Activated naive CD4-positive, alpha-beta T cell treated with anti-CD3 and anti-CD28 coated beads for 36 hours (primary cell): ENCODE measurements at regions of chr1 and their contacts with region 1.

Region 1: DNA sequence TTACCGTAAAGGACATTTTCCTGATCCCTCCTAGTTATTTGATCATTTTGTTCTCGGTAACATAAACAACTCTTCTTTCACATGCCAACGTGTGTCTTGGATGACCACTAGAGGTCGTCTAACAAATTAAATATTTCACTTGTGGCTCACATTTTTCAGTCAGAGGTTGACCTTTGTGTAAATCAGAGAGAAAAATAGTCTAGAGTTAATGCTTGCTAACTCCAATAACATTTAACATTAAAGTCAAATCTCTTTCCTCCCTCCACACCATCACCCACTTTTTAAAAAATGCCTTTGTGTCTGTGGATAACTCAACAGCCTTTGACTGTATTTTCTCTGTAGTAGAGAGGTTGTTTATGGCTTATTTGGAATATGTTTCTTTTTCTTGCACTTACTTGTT is 220.5 kb upstream of the B3GALT2 start:
- DNase-seq: no peak
- H3K4me3 Mint-ChIP-seq: no peak overlapping the region
- H3K27ac Mint-ChIP-seq: no peak overlapping the region
- H3K4me1 Mint-ChIP-seq: peaks cover 26% of the 10 kb centered on the region
- H3K27me3 Mint-ChIP-seq: no peaks in the 10 kb centered on the region

Region 2: GRCh38 chr1:193368302-193368701 is 38.6 kb before region 1 on chr1:
- CTCF ChIA-PET with region 1: no interaction called
- intact Hi-C with region 1: loop called (anchors 2 kb)
- DNase-seq: peak; percentile 10
- H3K4me3 Mint-ChIP-seq: peak overlapping the region; percentile 34
- H3K27ac Mint-ChIP-seq: peak overlapping the region; percentile 23
- H3K4me1 Mint-ChIP-seq: peaks cover 19% of the 10 kb centered on the region
- H3K27me3 Mint-ChIP-seq: no peaks in the 10 kb centered on the region

Region 3: GRCh38 chr1:193456811-193457280 is 49.9 kb after region 1 on chr1:
- CTCF ChIA-PET with region 1: no interaction called
- intact Hi-C with region 1: loop called (anchors 1 kb)
- DNase-seq: no peak
- H3K4me3 Mint-ChIP-seq: no peak overlapping the region
- H3K27ac Mint-ChIP-seq: no peak overlapping the region
- H3K4me1 Mint-ChIP-seq: peaks cover 23% of the 10 kb centered on the region
- H3K27me3 Mint-ChIP-seq: no peaks in the 10 kb centered on the region

Region 4: DNA sequence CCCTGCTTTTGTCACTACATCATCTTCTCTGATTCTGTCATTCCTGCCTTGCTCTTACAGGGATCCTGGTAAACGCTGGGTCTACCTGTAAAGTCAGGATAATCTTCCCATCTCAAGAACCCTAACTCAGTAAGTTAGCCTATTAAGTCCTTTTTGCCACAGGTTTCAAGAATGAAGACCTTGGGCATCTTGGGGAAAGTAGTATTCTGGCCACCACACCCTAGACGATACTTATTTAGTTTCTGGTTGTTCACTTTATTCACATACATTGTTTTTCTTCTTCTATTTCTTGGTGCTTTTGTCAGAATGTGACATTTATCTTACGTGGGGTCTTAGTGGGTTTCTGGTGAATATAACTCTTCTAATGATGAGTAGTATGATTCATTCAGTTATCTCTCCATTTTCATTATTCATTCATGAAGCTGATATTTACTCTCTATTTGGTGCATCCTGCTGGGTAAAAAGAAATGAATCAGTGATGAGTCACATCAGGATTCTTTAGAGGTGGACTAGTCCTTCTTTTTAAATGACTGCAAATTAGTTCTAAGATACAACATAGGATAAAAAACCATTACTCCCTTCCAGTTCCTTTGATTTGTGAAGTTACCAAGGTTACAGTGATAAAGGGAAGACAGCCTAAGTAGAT is 293.9 kb after region 1 on chr1:
- CTCF ChIA-PET with region 1: no interaction called
- intact Hi-C with region 1: loop called (anchors 2 kb)
- DNase-seq: no peak
- H3K4me3 Mint-ChIP-seq: no peak overlapping the region
- H3K27ac Mint-ChIP-seq: no peak overlapping the region
- H3K4me1 Mint-ChIP-seq: peaks cover 15% of the 10 kb centered on the region
- H3K27me3 Mint-ChIP-seq: no peaks in the 10 kb centered on the region

Region 5: DNA sequence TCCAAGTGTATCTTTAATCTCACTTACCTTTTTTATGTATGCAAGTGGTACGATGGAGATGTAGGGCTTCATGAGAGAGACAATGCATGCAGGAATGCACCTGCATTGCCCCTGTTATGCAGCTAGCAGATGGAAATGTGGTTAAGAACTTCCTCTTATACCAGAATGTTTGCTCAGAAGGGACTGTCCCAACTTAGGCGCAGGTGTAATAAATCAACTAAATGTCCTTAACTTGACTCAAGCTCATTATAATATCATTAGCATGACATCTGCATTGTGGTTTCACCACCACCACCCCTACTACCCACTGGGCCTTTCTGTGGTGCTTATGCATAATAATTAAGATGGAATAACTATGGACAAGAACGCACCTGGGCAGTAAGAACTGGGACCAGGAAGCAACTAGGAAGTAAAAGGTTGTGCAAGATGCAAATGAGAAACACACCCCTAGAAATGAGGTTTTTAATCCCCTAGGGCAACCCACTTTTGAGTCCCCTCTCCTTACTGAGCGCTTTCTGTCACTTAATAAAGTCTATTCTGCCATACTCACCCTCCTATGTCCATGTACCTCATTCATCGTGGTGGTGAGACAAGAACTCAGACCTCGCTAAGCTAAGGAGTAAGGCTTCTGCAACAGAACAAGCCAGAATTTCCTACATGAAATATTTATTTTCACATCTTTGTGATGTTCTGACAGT is 882.8 kb after region 1 on chr1:
- CTCF ChIA-PET with region 1: no interaction called
- intact Hi-C with region 1: loop called (anchors 1 kb)
- DNase-seq: peak; percentile 81
- H3K4me3 Mint-ChIP-seq: peak overlapping the region; percentile 54
- H3K27ac Mint-ChIP-seq: peak overlapping the region; percentile 59
- H3K4me1 Mint-ChIP-seq: peaks cover 25% of the 10 kb centered on the region
- H3K27me3 Mint-ChIP-seq: no peaks in the 10 kb centered on the region